Right ventricle myocardium superior (tissue), 1 donor: ENCODE measurements at regions of chr16 and their contacts with region 1.

Region 1: GRCh38 chr16:88437373-88437964 is 15.6 kb upstream of the ZFPM1 start:
- DNase-seq: peak; percentile 64
- ATAC-seq: peak; percentile 57

Region 2: DNA sequence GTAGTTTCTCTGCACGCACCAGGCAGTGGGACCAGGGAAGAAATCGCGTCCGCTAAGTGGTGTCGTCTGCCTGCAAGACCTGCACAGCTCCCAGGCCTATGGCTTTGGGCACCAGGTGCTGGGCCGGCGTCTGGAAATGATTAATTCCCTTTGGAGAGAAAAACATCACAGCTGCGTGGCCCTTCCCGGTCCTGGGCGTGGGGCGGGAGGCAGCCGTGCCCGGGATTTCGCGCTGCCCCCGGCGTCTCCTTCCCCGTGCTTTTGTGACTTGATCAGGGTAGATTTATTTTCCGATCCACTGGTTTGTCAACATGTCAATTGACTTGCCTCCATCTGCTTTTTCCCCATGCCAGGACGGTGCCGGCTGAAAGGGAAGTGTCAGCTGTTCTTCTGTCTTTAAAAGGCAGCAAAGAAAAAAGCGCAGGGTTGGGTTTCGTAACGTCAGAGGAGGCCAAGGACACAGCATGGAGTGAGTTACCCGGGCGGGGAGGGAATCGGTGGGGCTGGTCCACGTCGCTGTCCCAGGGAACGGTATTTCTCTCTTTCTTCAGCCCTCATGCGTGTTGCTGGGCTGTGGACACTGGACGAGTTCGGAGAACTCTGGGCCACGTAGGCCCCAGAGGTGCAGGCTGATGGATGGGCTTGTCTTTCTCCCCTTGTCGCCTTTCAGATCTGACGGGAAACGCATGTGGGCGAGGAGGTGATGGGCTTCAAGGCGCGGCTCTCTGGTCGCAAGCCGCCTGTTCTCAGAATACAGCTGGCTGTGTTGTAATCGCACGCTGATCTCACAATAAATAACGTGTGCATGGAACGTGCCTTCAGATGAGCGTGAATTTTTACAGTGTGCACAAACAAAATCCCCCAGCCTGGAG is 242.8 kb before region 1 on chr16:
- intact Hi-C with region 1: loop called (anchors 5 kb)
- DNase-seq: no peak
- ATAC-seq: peak; percentile 7

Region 3: DNA sequence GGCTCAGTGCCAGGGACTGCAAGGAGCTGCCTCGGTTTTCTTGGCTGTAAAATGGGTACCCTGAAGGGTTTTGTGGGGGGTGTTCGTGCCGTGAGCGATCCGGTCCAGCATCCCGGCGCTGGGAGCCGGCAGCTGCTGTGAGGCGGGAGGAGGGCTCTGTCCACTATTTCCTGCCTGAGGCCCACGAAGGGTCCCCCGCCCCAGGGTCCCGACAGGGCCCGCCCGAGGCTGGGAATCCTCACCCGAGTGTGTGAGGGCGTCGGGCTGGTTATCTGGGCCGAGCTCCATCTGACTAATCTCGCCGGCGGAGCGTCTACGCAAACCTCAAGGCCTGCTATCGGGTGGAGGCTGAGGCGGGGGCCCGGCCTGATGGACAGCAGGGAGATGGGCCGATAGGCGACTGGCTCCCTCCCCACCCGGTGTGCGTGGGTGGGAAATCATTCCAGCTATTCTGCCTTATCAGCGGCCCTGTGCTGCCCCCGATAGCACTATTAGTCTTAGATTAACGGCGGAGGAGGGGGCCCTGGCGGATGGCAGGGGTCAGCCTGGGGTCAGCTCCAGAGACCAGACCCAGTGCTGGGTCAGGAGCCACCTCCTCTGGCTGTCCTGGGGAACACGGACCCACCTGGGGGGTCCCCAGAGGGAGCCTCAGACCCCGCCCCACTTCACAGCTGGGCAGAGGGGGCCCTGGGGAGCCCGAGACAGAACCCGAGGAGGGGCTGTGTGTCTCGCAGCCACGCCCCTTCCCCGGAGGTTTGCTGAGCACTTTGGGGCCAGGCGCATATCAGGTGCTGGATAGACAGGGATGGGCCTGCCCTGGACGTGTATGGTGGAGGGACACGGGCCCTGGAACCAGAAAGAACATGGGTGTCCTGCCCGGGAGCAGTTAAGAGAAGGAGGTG is 60.3 kb after region 1 on chr16:
- intact Hi-C with region 1: no loop called
- DNase-seq: no peak
- ATAC-seq: no peak